Psoas muscle (tissue), 8 donors: ENCODE measurements at regions of chr17 and their contacts with region 1.

Region 1: DNA sequence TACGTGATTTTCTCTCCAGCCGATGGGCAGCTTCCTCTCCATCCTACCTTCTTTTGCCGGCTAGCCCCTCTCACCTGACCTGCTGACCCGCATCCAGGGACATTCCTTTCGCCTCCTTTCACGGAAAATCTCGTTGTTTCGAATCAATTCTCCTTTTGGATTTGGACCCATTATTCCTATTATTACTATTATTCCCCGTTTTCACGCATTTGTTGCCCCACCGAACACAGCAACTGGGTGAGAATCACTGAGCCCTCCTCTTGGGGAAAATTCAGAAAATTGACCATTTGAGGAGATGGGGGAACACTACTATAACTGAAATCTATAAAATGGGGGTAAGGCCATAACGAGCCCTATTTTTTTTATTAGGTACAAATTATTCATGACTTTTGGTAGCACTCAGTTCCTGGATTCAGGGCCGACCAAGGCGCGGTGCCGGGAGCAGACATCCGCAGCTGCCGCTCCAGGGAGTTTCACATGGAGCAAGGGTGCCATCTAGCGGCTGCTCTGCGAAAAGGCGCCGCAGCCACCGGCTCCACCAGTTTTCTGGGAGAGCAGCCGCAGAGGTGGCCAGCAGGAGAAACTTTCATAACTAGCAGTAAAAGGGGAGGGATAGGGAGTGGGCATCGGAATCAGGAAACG is 3.3 kb upstream of the HOXB8 start:
- DNase-seq: peak; percentile 84 to 93
- ATAC-seq: peak; percentile 87 to 97 (median 94)
- H3K4me3 ChIP-seq: peak overlapping the region; percentile 15
- H3K27ac ChIP-seq: no peak overlapping the region
- H3K4me1 ChIP-seq: peaks cover 4% of the 10 kb centered on the region
- H3K27me3 ChIP-seq: peaks cover 10 to 97% (median 53%) of the 10 kb centered on the region in 3 donors
- CTCF ChIP-seq: peak; percentile 99

Region 2: GRCh38 chr17:48307814-48308411 is 310.5 kb before region 1 on chr17:
- intact Hi-C with region 1: loop called (anchors 2 to 5 kb)
- DNase-seq: peak in 1 of 2 donors; percentile 28
- ATAC-seq: peak; percentile 54 to 77 (median 58)
- H3K4me3 ChIP-seq: no peak overlapping the region
- H3K27ac ChIP-seq: no peak overlapping the region
- H3K4me1 ChIP-seq: no peaks in the 10 kb centered on the region
- H3K27me3 ChIP-seq: peaks cover 0 to 33% (median 16%) of the 10 kb centered on the region in 3 donors
- CTCF ChIP-seq: peak; percentile 78

Region 3: GRCh38 chr17:48335858-48336500 is 282.4 kb before region 1 on chr17:
- intact Hi-C with region 1: loop called (anchors 2 to 5 kb)
- DNase-seq: no peak
- ATAC-seq: peak in 1 of 4 donors; percentile 40
- H3K4me3 ChIP-seq: no peak overlapping the region
- H3K27ac ChIP-seq: no peak overlapping the region
- H3K4me1 ChIP-seq: no peaks in the 10 kb centered on the region
- H3K27me3 ChIP-seq: peaks cover 0 to 13% (median 8%) of the 10 kb centered on the region in 3 donors
- CTCF ChIP-seq: peak; percentile 72

Region 4: GRCh38 chr17:48351831-48352332 is 266.5 kb before region 1 on chr17:
- intact Hi-C with region 1: loop called in 1 of 2 experiments (anchors 5 kb)
- DNase-seq: no peak
- ATAC-seq: no peak
- H3K4me3 ChIP-seq: no peak overlapping the region
- H3K27ac ChIP-seq: no peak overlapping the region
- H3K4me1 ChIP-seq: no peaks in the 10 kb centered on the region
- H3K27me3 ChIP-seq: peaks cover 0 to 10% (median 2%) of the 10 kb centered on the region in 3 donors
- CTCF ChIP-seq: peak; percentile 56

Region 5: DNA sequence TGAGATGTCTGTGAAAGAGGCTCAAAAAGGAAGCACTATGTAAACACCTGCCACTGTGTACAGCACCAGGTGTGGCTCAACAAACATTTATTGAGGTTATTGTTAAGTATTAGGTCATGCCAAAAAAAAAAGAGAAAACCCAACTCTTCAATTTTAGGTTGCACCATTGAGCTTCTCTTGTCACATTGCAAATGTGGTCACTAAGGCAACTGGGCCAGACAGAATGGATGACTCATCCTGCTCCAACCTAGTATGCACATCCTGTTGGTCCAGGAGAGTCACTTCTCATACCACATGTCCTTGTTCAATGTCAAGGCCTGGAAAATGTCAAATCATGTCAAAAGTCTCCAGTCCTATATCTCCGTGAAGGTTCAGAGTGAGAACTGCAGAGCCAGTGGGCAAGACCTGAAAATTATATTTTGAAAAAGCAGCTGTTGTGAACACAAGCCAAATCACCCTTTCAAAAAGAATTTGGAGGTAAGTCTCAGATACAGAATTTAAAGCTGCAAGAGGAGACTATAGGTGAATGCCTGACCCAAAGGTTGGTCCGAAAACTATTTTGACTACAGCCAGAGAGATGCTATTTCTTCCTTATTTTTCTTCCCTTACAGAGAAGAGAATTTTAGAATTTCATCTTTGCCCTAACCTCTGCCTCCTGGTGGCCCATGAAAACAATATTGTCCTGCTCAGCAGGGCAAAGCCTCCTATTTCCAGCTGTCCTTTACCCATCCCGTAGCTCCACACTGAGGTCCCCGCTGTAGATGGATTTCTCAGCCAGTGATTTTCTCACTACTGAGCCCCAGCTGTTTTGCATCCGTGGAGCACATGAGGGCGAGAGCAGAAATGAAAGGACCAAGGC is 112.4 kb before region 1 on chr17:
- intact Hi-C with region 1: no loop called
- DNase-seq: no peak
- ATAC-seq: peak in 2 of 4 donors; percentile 49 to 55
- H3K4me3 ChIP-seq: no peak overlapping the region
- H3K27ac ChIP-seq: no peak overlapping the region
- H3K4me1 ChIP-seq: no peaks in the 10 kb centered on the region
- H3K27me3 ChIP-seq: peaks cover 3 to 17% (median 6%) of the 10 kb centered on the region in 3 donors
- CTCF ChIP-seq: no peak